Prostate gland (tissue), 2 donors: ENCODE measurements at regions of chr17 and their contacts with region 1.

Region 1: DNA sequence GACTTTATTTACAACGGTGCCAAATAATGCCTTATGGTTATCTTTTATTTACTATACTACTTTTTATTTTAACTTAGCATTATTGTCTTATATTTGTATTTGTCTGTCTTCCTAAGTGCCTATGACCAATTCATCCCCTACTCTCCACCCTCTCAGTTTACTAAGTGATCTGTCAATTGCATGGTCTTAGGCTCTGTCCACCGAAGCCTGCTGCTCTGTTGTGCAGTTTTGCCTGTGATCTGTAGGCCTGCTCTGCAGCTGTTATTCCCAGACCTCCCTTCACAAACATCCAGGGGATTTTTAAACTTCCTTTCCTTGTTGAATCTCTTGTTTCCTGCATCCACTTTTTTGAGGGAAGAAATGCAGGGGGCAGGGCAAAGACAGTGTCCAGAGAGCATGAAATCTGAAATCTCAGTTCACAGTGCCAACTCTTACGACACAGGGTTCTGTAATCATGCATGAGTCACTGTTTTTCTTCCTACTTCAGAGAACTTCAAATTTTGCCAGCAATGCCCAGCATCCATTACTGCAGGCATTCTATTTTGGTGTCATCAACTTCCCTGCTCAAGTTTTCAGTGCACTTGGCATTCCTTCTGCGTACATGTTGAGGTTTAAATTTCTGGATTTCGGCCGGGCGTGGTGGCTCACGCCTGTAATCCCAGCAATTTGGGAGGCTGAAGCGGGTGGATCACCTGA is 11.4 kb downstream of the SLFN5 start:
- DNase-seq: peak; percentile 89
- H3K4me3 ChIP-seq: no peak overlapping the region
- H3K27ac ChIP-seq: peak overlapping the region; percentile 37 to 61
- H3K4me1 ChIP-seq: peaks cover 4% of the 10 kb centered on the region
- H3K27me3 ChIP-seq: no peaks in the 10 kb centered on the region
- CTCF ChIP-seq: no peak
- POLR2A ChIP-seq: no peak

Region 2: DNA sequence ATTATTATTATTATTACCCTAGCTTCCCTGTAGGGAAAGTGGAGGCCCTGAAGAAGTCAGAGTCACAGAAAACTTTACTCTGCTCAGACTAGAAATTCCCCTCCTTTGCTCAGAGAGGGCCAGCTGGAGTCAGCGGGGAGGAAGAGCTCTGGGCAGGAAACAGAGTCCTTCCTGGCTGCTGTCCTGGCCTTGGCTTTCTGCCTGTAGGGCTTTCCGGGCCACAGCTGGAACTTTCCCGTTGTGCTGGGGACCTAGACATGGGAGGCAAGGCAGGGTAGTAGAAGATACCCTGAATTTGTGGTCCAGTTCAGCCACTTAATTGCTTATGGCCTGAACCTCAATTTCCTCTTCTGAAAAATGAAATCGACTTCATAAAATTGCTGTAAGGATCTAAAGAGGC is 1013.2 kb before region 1 on chr17:
- intact Hi-C with region 1: loop called (anchors 10 kb)
- DNase-seq: no peak
- H3K4me3 ChIP-seq: no peak overlapping the region
- H3K27ac ChIP-seq: no peak overlapping the region
- H3K4me1 ChIP-seq: no peaks in the 10 kb centered on the region
- H3K27me3 ChIP-seq: no peaks in the 10 kb centered on the region
- CTCF ChIP-seq: no peak
- POLR2A ChIP-seq: no peak

Region 3: DNA sequence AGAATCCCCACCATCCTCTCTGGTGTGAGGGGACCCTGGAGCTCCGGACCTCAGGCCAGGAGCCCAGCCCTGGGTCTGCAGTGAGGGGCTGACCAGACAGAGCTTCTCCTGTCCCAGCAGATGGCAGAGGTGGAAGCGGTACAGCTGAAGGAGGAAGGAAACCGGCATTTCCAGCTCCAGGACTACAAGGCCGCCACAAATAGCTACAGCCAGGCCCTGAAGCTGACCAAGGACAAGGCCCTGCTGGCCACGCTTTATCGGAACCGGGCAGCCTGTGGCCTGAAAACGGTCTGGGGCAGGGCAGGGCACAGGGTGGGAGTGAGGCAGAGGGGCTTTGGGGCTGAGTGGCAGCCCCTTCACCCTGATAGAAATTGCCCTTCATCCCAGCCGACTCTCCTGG is 106.1 kb before region 1 on chr17:
- intact Hi-C with region 1: no loop called
- DNase-seq: no peak
- H3K4me3 ChIP-seq: no peak overlapping the region
- H3K27ac ChIP-seq: no peak overlapping the region
- H3K4me1 ChIP-seq: no peaks in the 10 kb centered on the region
- H3K27me3 ChIP-seq: no peaks in the 10 kb centered on the region
- CTCF ChIP-seq: no peak
- POLR2A ChIP-seq: no peak